Activated T-helper 1 cell treated with anti-CD3 and anti-CD28 coated beads, Interleukin-12 subunit alpha, Interleukin-12 subunit beta, Interleukin-2, Interleukin-4 antibody, amounts not matched to agents 30 ng/mL and 10 ng/mL and 1 ng/mL, durations not matched to agents 14 hours and 24 hours and 36 hours (primary cell): ENCODE measurements at regions of chr2 and their contacts with region 1.

Region 1: GRCh38 chr2:70069049-70069448 is 18.2 kb upstream of the PCBP1 start:
- DNase-seq: peak; percentile 81
- H3K4me3 Mint-ChIP-seq: peak overlapping the region; percentile 68
- H3K27ac Mint-ChIP-seq: peak overlapping the region; percentile 83
- H3K4me1 Mint-ChIP-seq: peaks cover 47% of the 10 kb centered on the region
- H3K27me3 Mint-ChIP-seq: no peaks in the 10 kb centered on the region

Region 2: DNA sequence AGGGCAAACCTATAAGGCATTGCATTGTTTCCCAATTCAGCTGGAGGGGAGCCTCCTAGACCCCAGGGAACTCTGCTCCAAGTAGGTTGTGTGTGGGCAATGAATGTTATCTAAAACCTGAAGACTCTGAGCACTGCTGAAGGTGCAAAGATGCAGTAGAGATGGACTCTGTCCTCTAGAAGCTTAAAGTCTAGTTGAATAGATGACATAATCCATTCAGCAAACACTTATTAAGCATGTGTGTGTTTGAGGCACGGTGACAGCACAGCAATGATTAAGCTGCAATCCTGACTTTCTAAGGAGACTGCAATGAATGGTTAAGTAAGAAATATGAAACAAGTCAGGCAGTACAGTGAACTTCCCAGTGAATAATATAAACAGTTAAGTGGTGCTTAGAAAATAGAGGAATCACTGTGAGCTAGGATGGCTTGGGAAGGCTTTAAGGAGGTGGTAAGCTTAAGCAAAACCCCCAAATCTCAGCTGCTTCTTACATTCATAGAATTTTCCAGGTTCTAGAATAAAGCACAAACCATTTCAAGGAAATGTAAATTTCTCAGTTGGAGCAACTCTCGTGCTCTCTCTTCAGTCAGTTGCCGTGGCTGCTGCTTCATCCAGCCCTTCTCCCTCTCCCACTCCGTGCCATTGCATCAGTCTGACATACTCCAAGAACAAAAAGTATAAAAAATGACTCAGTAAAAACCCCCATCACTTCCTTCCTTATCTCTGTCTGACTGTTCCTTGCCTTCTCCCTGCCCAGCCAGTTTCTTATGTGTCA is 135.0 kb before region 1 on chr2:
- intact Hi-C with region 1: loop called (anchors 5 kb)
- DNase-seq: no peak
- H3K4me3 Mint-ChIP-seq: peak overlapping the region; percentile 1
- H3K27ac Mint-ChIP-seq: peak overlapping the region; percentile 75
- H3K4me1 Mint-ChIP-seq: peaks cover 41% of the 10 kb centered on the region
- H3K27me3 Mint-ChIP-seq: no peaks in the 10 kb centered on the region

Region 3: DNA sequence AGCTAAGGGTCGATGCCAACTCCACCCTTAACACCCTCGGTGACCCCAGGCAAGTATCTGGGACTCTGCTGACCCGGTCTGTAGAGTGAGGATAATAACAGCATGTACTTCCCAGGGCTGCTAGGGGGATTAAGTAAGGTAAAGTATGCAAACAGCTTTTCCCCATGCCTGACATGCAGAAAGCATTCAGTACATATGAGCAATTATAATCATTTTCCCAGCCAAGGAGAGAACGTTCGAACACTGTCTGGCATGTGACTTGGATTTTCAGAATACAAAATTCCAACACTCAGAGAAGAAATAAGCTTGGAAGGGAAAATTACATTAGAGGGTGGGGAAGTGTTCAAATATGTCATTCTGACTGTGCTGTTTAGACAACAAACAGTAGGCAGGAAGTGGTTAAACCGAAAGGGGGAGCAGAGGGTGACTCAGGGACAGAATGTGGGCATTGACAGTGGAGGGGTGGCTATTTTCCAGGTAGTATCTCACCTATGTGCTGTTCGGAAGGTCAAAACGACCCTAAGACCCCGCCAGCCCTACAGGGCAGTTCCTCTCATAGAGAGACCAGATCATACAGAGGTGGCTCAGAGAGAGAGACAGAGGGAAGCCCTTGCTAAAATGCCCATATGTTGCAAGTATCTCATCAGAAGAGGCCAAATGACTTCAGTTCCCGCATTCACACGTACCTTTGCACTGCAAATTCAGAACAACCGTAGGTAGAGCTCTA is 122.5 kb before region 1 on chr2:
- intact Hi-C with region 1: loop called (anchors 1 kb)
- DNase-seq: peak; percentile 66
- H3K4me3 Mint-ChIP-seq: peak overlapping the region; percentile 67
- H3K27ac Mint-ChIP-seq: peak overlapping the region; percentile 86
- H3K4me1 Mint-ChIP-seq: peaks cover 52% of the 10 kb centered on the region
- H3K27me3 Mint-ChIP-seq: peaks cover 5% of the 10 kb centered on the region

Region 4: DNA sequence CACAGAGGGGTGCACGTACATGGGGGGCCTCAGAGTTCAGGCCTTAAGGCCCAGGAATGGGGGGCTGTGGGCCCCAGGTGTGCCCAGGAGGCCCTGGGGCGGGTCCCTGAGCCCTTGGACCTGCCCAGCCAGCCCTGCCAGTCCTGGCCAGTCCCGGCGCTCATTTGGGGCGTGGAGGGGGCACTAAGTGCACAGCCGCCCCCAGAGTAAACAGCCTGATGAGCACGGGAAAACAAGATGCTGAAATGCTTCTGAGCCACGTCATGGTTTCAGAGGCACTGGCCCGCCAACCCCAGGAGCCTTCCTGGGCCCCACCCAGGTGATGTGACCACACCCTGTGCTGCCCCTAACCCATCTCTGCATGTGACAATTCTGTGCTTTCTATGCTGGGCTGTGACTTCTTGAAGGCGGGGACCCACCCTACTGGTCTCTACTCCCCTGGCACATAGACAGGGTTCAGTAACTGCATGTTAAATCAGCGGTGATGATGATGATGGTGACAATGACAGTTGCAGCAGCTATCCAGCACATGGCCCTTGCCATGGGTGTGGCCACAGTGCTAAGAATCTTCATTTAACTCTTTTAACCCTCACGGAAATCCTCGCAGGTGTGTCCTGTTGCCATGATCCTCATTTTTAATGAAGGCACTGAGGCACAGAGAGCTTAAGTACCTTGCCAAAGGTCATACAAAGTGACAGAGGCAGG is 79.5 kb before region 1 on chr2:
- intact Hi-C with region 1: loop called (anchors 2 kb)
- DNase-seq: no peak
- H3K4me3 Mint-ChIP-seq: no peak overlapping the region
- H3K27ac Mint-ChIP-seq: no peak overlapping the region
- H3K4me1 Mint-ChIP-seq: peaks cover 12% of the 10 kb centered on the region
- H3K27me3 Mint-ChIP-seq: no peaks in the 10 kb centered on the region

Region 5: GRCh38 chr2:70014959-70015358 is 54.1 kb before region 1 on chr2:
- intact Hi-C with region 1: loop called (anchors 5 kb)
- DNase-seq: no peak
- H3K4me3 Mint-ChIP-seq: no peak overlapping the region
- H3K27ac Mint-ChIP-seq: peak overlapping the region; percentile 4
- H3K4me1 Mint-ChIP-seq: peaks cover 35% of the 10 kb centered on the region
- H3K27me3 Mint-ChIP-seq: no peaks in the 10 kb centered on the region

Region 6: DNA sequence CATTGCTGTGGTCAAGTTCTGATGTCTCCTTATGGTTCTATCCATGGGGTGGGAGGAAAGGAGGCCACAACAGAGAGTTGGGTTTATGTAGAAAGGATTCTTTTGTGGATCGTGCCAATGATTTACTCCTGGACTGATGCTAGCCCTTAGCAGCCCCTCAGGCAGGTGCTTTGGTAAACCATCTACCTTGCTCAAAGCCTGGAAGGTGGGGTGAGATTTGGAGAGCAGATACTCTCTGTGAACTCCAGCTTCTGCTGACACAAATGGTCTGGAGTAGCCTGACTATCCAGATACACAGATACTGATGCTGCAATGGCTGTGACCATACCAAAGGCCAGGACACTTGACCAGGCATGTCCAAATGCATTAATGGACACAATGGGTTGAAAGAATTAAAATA is 43.6 kb before region 1 on chr2:
- intact Hi-C with region 1: no loop called
- DNase-seq: no peak
- H3K4me3 Mint-ChIP-seq: no peak overlapping the region
- H3K27ac Mint-ChIP-seq: no peak overlapping the region
- H3K4me1 Mint-ChIP-seq: peaks cover 14% of the 10 kb centered on the region
- H3K27me3 Mint-ChIP-seq: no peaks in the 10 kb centered on the region

Region 7: DNA sequence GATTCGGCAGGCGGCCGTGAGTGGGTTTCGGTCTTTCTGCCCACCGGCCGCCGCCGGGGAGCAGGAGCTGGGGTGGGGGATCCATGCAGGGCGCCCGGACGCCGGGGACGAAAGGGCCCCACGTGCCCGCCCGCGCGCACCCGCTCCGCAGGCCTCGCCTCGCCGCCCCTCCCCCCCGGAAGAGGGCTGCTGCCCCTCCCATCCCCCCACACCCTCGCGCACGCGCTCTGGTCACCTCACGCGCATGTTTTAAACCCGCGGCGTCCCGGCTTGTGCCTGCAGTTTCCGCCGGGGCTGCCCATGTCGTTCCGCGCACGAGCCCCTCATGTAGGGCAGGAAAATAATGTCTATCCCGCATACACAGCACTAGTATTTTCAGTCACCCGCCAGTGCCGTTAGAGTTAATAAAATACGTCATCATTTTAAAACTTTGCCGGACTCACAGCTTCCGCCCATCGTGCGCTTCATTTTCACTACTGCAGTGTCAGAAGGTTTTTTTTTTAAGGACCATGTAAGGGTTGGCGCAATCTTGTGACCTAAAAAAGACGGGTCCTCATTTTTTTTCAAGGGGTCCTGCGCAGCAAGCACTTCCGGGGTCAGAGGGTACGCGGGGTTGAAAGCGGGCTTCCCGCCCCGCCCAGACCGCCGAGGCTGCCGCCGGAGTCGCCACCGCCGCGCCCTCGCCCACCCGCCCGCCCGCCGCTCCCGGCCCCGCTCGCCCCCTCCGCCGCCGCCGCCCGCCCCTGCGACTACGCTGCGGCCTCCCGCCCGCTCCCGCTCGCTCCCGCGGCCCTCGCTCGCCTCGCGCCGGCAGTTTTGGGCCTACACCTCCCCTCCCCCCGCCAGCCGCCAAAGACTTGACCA is 18.0 kb after region 1 on chr2 and contains the start of gene PCBP1:
- intact Hi-C with region 1: loop called (anchors 1 kb)
- DNase-seq: peak; percentile 91
- H3K4me3 Mint-ChIP-seq: peak within 1 kb of the TSS; percentile 99
- H3K27ac Mint-ChIP-seq: peak within 1 kb of the TSS; percentile 100
- H3K4me1 Mint-ChIP-seq: peaks cover 56% of the 10 kb centered on the region
- H3K27me3 Mint-ChIP-seq: no peaks in the 10 kb centered on the region
- total RNA-seq, gene PCBP1: 426 and 427 TPM in 2 replicates

Region 8: DNA sequence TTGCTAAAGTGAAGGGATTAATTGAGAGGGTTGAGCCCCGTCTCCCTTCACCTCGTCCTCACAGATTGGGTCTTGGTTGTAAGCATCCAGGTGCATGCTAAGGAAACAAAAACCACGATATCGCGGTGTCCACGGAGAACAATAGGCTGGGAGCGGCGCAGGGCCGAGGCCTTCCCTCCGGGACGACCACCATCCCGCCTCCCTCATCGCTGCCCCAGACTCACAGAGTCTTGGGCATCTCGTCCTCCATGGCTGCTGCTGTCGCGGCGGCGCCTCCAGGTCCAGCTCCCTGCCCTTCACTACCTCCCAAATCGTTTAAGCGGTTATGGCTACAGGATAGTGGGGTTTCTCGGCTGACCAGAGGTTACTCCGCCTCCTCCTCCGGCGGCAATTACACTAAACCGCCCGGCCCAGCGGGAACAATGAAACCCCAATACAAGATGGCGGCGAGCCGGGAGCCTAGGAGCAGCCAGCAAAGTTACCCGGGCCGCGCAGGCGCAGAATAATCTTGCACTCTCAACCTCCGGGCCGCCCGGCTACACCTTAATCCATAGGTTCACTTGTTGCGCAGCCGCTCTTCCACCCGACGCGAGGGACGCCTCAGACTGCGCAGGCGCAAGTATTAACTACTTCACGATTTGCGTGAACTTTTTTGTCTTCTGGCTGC is 179.3 kb after region 1 on chr2 and contains the start of gene TIA1:
- intact Hi-C with region 1: loop called (anchors 1 kb)
- DNase-seq: peak; percentile 98
- H3K4me3 Mint-ChIP-seq: peak within 1 kb of the TSS; percentile 99
- H3K27ac Mint-ChIP-seq: peak within 1 kb of the TSS; percentile 99
- H3K4me1 Mint-ChIP-seq: peaks cover 42% of the 10 kb centered on the region
- H3K27me3 Mint-ChIP-seq: no peaks in the 10 kb centered on the region
- total RNA-seq, gene TIA1: 96.8 and 101 TPM in 2 replicates